ENCODE measurements at regions of chrX and their contacts with region 1.

Region 1: DNA sequence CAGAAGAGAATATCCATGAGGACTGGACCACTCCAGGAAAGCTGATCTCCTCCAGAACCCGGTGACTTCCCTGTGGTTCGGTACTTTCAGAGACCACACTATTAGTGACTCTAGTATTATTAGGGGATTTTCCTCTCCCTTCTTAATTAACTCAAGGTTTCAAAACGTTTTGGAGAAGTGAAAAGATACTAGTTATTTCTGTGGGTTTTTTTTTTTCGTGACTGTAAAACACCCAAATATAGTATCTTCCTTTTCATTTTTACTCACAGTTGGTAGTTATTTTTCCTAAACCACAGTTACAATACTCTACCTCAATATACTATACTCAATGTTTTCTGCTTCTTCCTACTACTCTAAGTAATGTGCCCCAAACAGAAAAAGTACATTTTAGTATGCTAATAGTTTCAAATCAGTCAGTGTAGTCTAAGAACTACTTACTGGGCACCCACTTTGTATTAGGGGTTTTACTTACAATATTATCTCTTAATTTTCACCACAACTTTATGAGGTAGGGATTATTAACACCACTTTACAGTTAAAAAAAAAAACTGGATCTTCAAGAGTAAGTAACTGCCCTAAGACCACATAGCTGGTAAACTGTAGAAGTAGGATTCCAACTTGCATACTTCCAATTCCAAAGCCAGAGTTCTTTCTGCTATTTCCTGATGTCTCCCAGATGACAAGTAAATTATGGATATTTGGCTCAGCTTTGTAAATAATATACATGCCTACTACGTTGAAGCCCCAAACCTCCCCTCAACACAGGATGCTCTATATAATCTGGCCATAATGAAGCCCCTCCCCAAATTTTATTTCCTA is 45.0 kb downstream of the SLC9A7 start:
- DNase-seq: peak; percentile 82
- ATAC-seq: peak; percentile 70
- H3K4me3 ChIP-seq: peak overlapping the region; percentile 33
- H3K27ac ChIP-seq: peak overlapping the region; percentile 89
- H3K4me1 ChIP-seq: peaks cover 60% of the 10 kb centered on the region
- H3K27me3 ChIP-seq: no peaks in the 10 kb centered on the region
- CTCF ChIP-seq: no peak
- EP300 ChIP-seq: peak; percentile 98 to 99
- POLR2A ChIP-seq: no peak
- RAD21 ChIP-seq: no peak

Region 2: GRCh38 chrX:46125111-46125510 is 588.8 kb before region 1 on chrX:
- CTCF ChIA-PET with region 1: no interaction called
- POLR2A ChIA-PET with region 1: no interaction called
- RAD21 ChIA-PET with region 1: no interaction called
- SMC1A ChIA-PET with region 1: no interaction called
- in situ Hi-C with region 1: no loop called
- intact Hi-C with region 1: no loop called
- DNase-seq: no peak
- ATAC-seq: no peak; the same call in 2 of the 3 replicates
- H3K4me3 ChIP-seq: no peak overlapping the region
- H3K27ac ChIP-seq: no peak overlapping the region
- H3K4me1 ChIP-seq: no peaks in the 10 kb centered on the region
- H3K27me3 ChIP-seq: no peaks in the 10 kb centered on the region; a peak in 1 of 4 replicates
- CTCF ChIP-seq: no peak
- EP300 ChIP-seq: no peak
- POLR2A ChIP-seq: no peak
- RAD21 ChIP-seq: no peak

Region 3: DNA sequence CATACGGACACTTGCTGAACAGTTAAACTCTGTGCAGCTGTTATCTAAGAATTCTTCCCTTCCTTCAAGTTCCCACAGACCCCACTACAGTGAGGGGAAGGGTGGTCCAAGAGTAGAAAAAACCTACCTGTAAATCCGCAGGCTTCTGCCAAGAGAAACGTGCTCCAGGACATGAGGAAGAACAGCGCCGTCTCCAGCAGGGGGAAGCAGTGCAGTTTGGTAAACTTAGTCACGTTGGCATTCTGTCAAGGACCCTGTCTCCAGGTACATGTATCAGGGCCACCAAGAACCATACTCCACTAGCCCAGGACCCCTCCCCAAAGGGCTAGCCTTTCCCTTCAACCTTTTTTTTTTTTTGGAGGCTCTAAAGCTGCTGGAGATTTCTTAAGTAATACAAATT is 60.4 kb before region 1 on chrX:
- CTCF ChIA-PET with region 1: no interaction called
- POLR2A ChIA-PET with region 1: no interaction called
- RAD21 ChIA-PET with region 1: no interaction called
- SMC1A ChIA-PET with region 1: interaction called, 9 read pairs
- in situ Hi-C with region 1: no loop called
- intact Hi-C with region 1: loop called (anchors 1 kb)
- DNase-seq: no peak
- ATAC-seq: peak; percentile 67
- H3K4me3 ChIP-seq: no peak overlapping the region
- H3K27ac ChIP-seq: peak overlapping the region; percentile 62
- H3K4me1 ChIP-seq: peaks cover 16% of the 10 kb centered on the region
- H3K27me3 ChIP-seq: no peaks in the 10 kb centered on the region
- CTCF ChIP-seq: peak; percentile 46 to 52 (median 48); a peak in 5 of 6 replicates
- EP300 ChIP-seq: no peak
- POLR2A ChIP-seq: no peak
- RAD21 ChIP-seq: peak; percentile 55

Region 4: DNA sequence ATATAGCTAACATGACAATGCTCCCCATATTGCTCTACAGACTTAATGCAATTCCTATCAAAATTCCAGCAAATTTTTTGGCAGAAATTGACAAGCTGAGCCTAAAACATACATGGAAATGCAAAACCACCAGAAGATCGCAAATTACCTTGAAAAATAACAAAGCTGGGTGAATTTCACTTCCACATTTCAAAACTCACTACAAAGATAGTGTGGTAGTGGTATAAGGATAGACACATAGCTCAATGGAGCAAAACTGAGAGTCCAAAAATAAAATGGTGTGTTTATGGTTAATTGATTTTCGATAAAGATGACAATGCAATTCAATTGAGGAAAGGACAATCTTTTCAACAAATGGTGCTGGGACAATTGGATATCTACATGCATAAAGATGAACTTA is 20.7 kb before region 1 on chrX:
- CTCF ChIA-PET with region 1: interaction called, 7 read pairs
- POLR2A ChIA-PET with region 1: interaction called, 10 read pairs
- RAD21 ChIA-PET with region 1: interaction called, 12 read pairs
- SMC1A ChIA-PET with region 1: interaction called, 107 read pairs
- in situ Hi-C with region 1: no loop called
- intact Hi-C with region 1: no loop called
- DNase-seq: peak; percentile 62
- ATAC-seq: peak; percentile 92
- H3K4me3 ChIP-seq: no peak overlapping the region
- H3K27ac ChIP-seq: peak overlapping the region; percentile 30; the same call in 1 of the 2 replicates
- H3K4me1 ChIP-seq: peaks cover 23% of the 10 kb centered on the region
- H3K27me3 ChIP-seq: no peaks in the 10 kb centered on the region
- CTCF ChIP-seq: no peak
- EP300 ChIP-seq: peak; percentile 10 to 71; a peak in 3 of 4 replicates
- POLR2A ChIP-seq: no peak
- RAD21 ChIP-seq: no peak